Activated CD8-positive, alpha-beta T cell treated with anti-CD3 and anti-CD28 coated beads for 36 hours (primary cell): ENCODE measurements at regions of chr19 and their contacts with region 1.

Region 1: DNA sequence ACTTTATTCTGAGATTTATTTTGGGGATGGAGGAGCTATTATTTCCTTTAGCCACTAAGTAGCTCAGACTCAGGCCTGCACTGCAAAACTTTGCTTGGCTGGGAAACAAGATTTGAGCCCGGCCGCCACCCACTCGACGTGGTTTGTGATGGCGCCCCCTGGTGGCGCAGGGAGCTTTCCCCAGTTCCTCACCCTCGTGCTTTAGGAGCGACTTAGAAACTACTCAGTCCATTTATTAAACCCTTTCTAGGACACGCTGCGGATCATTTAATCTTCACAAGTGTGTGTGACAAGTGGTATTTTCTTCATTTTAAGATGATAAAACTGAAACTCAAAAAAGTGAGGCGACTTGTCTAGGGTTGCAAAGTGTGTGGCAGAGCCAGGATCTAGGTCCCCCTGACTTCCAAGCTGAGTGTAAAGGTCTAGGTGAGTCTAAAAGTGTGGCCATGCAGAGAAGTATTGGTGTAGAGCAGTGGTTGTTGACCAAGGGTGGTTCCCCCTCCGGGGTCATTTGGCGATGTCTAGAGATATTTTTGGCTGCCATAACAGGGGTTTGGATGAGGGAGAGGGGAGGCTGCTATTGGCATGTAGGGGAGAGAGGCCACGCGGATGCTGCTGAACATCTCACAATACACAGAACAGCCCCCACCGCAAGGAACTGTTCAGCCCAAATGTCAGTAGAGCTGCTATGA is 2.2 kb downstream of the CXCL17 start:
- DNase-seq: peak; percentile 89
- ATAC-seq: peak; percentile 55
- H3K4me3 Mint-ChIP-seq: no peak overlapping the region
- H3K27ac Mint-ChIP-seq: peak overlapping the region; percentile 45
- H3K4me1 Mint-ChIP-seq: peaks cover 18% of the 10 kb centered on the region
- H3K27me3 Mint-ChIP-seq: no peaks in the 10 kb centered on the region
- CTCF ChIP-seq: peak; percentile 92

Region 2: DNA sequence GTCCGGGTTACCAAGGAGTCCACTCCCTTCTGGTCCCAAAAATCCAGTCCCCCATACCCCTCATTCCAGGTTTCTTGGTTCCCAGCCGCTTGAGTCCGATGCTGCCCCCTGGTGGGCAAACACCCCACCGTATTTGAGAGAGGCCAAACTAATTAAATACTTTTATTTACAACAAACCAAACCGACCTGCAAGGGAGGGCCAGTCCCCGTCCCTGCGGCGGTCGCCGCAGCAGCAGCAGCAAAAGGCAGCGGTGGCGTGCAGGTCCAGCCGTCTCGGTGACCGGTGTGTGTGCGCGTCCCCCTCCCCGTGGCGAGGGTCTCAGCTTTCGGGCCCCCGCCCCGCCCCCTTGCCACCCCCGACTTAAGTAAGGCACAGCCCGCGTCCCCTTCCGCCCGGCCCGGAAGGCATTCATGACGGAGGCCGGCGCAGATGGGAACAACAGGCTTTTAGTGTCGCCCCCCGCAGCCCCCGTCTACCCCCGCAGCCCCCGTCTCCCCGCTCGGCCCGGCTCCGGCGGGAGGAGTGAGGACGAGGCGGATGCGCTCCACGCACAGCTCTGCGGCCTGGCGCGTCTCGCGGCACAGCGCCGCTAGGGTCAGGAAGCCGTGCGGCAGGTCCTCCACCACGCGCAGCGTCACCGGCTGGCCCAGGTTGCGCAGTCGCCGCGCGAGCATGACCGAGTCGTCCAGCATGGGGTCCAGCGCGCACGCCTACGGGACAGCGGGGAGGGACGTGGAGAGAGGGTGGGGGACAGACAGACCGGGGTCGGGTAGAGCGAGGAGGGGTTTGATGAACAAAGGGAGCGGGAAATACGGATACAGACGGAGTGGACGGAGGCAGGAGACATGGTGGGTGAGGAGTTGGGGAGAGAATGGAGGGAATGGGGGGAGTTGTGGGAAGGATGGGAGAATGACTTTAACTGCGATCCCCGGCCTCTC is 38.9 kb before region 1 on chr19:
- CTCF ChIA-PET with region 1: interaction called, 18 read pairs
- POLR2A ChIA-PET with region 1: interaction called, 3 read pairs
- intact Hi-C with region 1: no loop called
- DNase-seq: peak; percentile 88
- ATAC-seq: peak; percentile 47
- H3K4me3 Mint-ChIP-seq: peak overlapping the region; percentile 73
- H3K27ac Mint-ChIP-seq: peak overlapping the region; percentile 75
- H3K4me1 Mint-ChIP-seq: peaks cover 40% of the 10 kb centered on the region
- H3K27me3 Mint-ChIP-seq: no peaks in the 10 kb centered on the region
- CTCF ChIP-seq: peak; percentile 95

Region 3: DNA sequence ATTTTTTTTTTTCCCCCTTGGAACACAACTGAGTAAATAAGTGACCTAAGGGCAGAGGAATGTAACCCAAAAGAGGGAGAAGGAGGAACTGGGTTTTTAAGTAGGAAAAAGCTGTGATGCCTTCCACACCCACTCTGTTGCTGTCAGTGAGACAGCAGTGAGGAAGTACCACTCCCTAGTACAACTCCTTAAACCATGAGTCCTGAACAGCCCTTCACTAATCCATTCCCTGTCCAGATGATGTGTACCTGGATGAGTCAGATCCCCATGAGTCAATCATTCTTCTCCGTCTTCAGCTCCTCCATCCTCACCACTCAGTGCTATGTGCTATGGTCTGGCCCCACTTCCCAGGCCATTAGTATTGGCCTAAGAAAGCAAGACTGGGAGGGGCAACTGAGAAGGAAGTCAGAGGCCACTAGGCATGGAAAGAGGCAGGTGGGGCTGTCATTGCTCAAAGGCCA is 15.1 kb after region 1 on chr19:
- CTCF ChIA-PET with region 1: interaction called, 61 read pairs
- POLR2A ChIA-PET with region 1: interaction called, 8 read pairs
- intact Hi-C with region 1: no loop called
- DNase-seq: no peak
- ATAC-seq: no peak
- H3K4me3 Mint-ChIP-seq: no peak overlapping the region
- H3K27ac Mint-ChIP-seq: no peak overlapping the region
- H3K4me1 Mint-ChIP-seq: peaks cover 16% of the 10 kb centered on the region
- H3K27me3 Mint-ChIP-seq: no peaks in the 10 kb centered on the region
- CTCF ChIP-seq: no peak

Region 4: GRCh38 chr19:42514449-42514848 is 73.9 kb after region 1 on chr19:
- CTCF ChIA-PET with region 1: interaction called, 11 read pairs
- POLR2A ChIA-PET with region 1: no interaction called
- intact Hi-C with region 1: no loop called
- DNase-seq: peak; percentile 20
- ATAC-seq: peak; percentile 72
- H3K4me3 Mint-ChIP-seq: no peak overlapping the region
- H3K27ac Mint-ChIP-seq: no peak overlapping the region
- H3K4me1 Mint-ChIP-seq: peaks cover 20% of the 10 kb centered on the region
- H3K27me3 Mint-ChIP-seq: no peaks in the 10 kb centered on the region
- CTCF ChIP-seq: no peak